T-cell (primary cell): ENCODE measurements at regions of chr3 and their contacts with region 1.

Region 1: GRCh38 chr3:172467170-172467824 is 19.0 kb upstream of the GHSR start:
- DNase-seq: no peak
- ATAC-seq: no peak
- H3K4me3 ChIP-seq: no peak overlapping the region
- H3K4me3 Mint-ChIP-seq: no peak overlapping the region
- H3K27ac ChIP-seq: no peak overlapping the region
- H3K27ac Mint-ChIP-seq: no peak overlapping the region
- H3K4me1 ChIP-seq: no peaks in the 10 kb centered on the region
- H3K4me1 Mint-ChIP-seq: no peaks in the 10 kb centered on the region
- H3K27me3 ChIP-seq: peaks cover 0 to 9% of the 10 kb centered on the region in 2 experiments
- H3K27me3 Mint-ChIP-seq: peaks cover 11 to 22% of the 10 kb centered on the region in 2 donors

Region 2: GRCh38 chr3:171113714-171114113 is 1353.6 kb before region 1 on chr3:
- CTCF ChIA-PET with region 1: interaction called in 1 of 2 experiments, 11 read pairs
- POLR2A ChIA-PET with region 1: no interaction called
- DNase-seq: no peak
- ATAC-seq: no peak
- H3K4me3 ChIP-seq: no peak overlapping the region
- H3K4me3 Mint-ChIP-seq: no peak overlapping the region
- H3K27ac ChIP-seq: no peak overlapping the region
- H3K27ac Mint-ChIP-seq: no peak overlapping the region
- H3K4me1 ChIP-seq: no peaks in the 10 kb centered on the region
- H3K4me1 Mint-ChIP-seq: peaks cover 0 to 3% (median 2%) of the 10 kb centered on the region in 3 donors
- H3K27me3 ChIP-seq: no peaks in the 10 kb centered on the region
- H3K27me3 Mint-ChIP-seq: no peaks in the 10 kb centered on the region